ENCODE measurements at regions of chr19 and their contacts with region 1.

Region 1: GRCh38 chr19:17125715-17126677 is 50.4 kb downstream of the MYO9B start:
- DNase-seq: peak; percentile 90
- H3K4me3 Mint-ChIP-seq: peak overlapping the region; percentile 75
- H3K27ac Mint-ChIP-seq: peak overlapping the region; percentile 99
- H3K4me1 Mint-ChIP-seq: peaks cover 67% of the 10 kb centered on the region
- H3K27me3 Mint-ChIP-seq: no peaks in the 10 kb centered on the region

Region 2: GRCh38 chr19:17075035-17075863 is 50.7 kb before region 1 on chr19 and contains the starts of genes HAUS8 and MYO9B:
- CTCF ChIA-PET with region 1: interaction called, 4 read pairs
- POLR2A ChIA-PET with region 1: interaction called, 50 read pairs
- DNase-seq: peak; percentile 100
- H3K4me3 Mint-ChIP-seq: peak within 1 kb of the TSS; percentile 99
- H3K27ac Mint-ChIP-seq: peak within 1 kb of the TSS; percentile 94
- H3K4me1 Mint-ChIP-seq: peaks cover 59% of the 10 kb centered on the region
- H3K27me3 Mint-ChIP-seq: no peaks in the 10 kb centered on the region
- total RNA-seq, gene HAUS8: 37.0 to 40.6 TPM
- total RNA-seq, gene MYO9B: 190 to 203 TPM

Region 3: DNA sequence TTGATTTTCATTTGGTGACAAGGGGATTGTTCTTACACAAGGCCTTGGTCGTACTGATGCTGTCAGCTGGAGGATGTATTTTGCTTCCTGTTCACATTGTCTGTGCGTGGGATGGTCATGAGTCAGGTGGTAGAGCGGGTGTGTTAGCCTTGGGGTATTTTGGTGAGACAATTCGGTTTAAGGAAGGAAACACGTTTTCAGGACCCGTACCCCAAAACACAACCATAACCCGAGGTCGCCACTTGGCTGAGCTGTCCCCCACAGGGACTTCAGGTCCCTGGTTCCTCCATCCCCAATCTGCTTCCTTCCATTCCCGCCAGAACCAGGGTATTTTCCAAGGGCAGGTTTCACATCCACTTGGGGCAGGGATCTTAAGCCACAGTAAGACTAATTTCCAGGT is 35.4 kb before region 1 on chr19:
- CTCF ChIA-PET with region 1: no interaction called
- POLR2A ChIA-PET with region 1: no interaction called
- DNase-seq: peak; percentile 26
- H3K4me3 Mint-ChIP-seq: no peak overlapping the region
- H3K27ac Mint-ChIP-seq: peak overlapping the region; percentile 12
- H3K4me1 Mint-ChIP-seq: peaks cover 31% of the 10 kb centered on the region
- H3K27me3 Mint-ChIP-seq: no peaks in the 10 kb centered on the region

Region 4: GRCh38 chr19:17183858-17184321 is 57.9 kb after region 1 on chr19:
- CTCF ChIA-PET with region 1: interaction called, 8 read pairs
- POLR2A ChIA-PET with region 1: interaction called, 44 read pairs
- DNase-seq: peak; percentile 45
- H3K4me3 Mint-ChIP-seq: peak overlapping the region; percentile 73
- H3K27ac Mint-ChIP-seq: peak overlapping the region; percentile 97
- H3K4me1 Mint-ChIP-seq: peaks cover 34% of the 10 kb centered on the region
- H3K27me3 Mint-ChIP-seq: no peaks in the 10 kb centered on the region

Region 5: GRCh38 chr19:17226002-17226933 is 100.3 kb after region 1 on chr19 and contains the start of gene OCEL1:
- CTCF ChIA-PET with region 1: no interaction called
- POLR2A ChIA-PET with region 1: interaction called, 12 read pairs
- DNase-seq: peak; percentile 98
- H3K4me3 Mint-ChIP-seq: peak within 1 kb of the TSS; percentile 91
- H3K27ac Mint-ChIP-seq: peak within 1 kb of the TSS; percentile 96
- H3K4me1 Mint-ChIP-seq: peaks cover 10% of the 10 kb centered on the region
- H3K27me3 Mint-ChIP-seq: no peaks in the 10 kb centered on the region
- total RNA-seq, gene OCEL1: 20.9 to 22.6 TPM

Measured in activated CD4-positive, alpha-beta memory T cell treated with anti-CD3 and anti-CD28 coated beads, Interleukin-2, amount 10 ng/mL, durations not matched to agents 7 days and 5 days (primary cell).